Naive thymus-derived CD4-positive, alpha-beta T cell (primary cell): ENCODE measurements at regions of chr1 and their contacts with region 1.

Region 1: DNA sequence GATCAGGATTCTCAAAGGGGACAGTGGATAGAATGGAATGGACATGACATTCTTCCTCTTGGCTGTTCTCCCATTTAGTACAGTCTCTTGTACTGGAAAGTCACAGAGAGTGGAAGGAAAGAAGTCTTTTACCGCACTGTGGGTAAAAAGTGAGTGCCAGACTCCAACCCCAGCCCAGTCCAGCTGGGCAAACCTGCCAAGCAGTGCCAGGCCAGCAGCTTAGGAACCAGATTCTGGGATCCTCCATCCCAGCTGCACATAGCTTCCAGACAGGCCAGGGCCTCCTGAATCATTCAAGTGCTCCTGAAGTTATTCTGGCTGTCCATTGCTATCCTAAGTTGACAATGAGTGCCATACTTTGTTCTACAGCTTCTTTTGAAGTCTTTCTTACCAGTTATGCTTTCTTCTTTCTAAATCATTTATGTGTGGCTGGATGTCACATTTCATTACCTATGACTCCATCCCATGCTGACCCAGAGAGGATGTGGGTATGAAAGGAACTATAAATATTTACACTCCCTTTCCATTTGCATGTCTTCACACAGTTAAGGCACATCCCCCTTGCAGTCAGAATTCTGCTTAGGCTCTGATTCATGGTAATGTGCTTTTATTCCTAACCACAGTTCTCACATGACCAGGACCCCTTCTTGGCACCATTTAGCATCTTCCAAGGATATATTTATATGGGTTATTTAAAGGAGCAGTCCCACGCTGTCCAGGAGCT is 88.9 kb downstream of the AK5 start:
- DNase-seq: peak in 1 of 9 donors; percentile 1
- ATAC-seq: no peak
- H3K4me3 ChIP-seq: no peak overlapping the region
- H3K4me3 Mint-ChIP-seq: peak overlapping the region in 3 of 10 donors; percentile 14 to 23 (median 21)
- H3K27ac ChIP-seq: no peak overlapping the region
- H3K27ac Mint-ChIP-seq: peak overlapping the region in 2 of 9 donors; percentile 16 to 63
- H3K4me1 ChIP-seq: peaks cover 0 to 18% of the 10 kb centered on the region in 2 donors
- H3K4me1 Mint-ChIP-seq: peaks cover 3 to 50% (median 34%) of the 10 kb centered on the region in 7 donors
- H3K27me3 ChIP-seq: no peaks in the 10 kb centered on the region
- H3K27me3 Mint-ChIP-seq: no peaks in the 10 kb centered on the region

Region 2: GRCh38 chr1:77322061-77322900 is 48.5 kb before region 1 on chr1:
- CTCF ChIA-PET with region 1: no interaction called
- POLR2A ChIA-PET with region 1: no interaction called
- intact Hi-C with region 1: loop called in 1 of 2 experiments (anchors 5 kb)
- DNase-seq: no peak
- ATAC-seq: no peak
- H3K4me3 ChIP-seq: no peak overlapping the region
- H3K4me3 Mint-ChIP-seq: no peak overlapping the region
- H3K27ac ChIP-seq: no peak overlapping the region
- H3K27ac Mint-ChIP-seq: peak overlapping the region in 5 of 9 donors; percentile 22 to 75 (median 32)
- H3K4me1 ChIP-seq: no peaks in the 10 kb centered on the region
- H3K4me1 Mint-ChIP-seq: peaks cover 0 to 44% (median 18%) of the 10 kb centered on the region in 7 donors
- H3K27me3 ChIP-seq: no peaks in the 10 kb centered on the region
- H3K27me3 Mint-ChIP-seq: no peaks in the 10 kb centered on the region

Region 3: DNA sequence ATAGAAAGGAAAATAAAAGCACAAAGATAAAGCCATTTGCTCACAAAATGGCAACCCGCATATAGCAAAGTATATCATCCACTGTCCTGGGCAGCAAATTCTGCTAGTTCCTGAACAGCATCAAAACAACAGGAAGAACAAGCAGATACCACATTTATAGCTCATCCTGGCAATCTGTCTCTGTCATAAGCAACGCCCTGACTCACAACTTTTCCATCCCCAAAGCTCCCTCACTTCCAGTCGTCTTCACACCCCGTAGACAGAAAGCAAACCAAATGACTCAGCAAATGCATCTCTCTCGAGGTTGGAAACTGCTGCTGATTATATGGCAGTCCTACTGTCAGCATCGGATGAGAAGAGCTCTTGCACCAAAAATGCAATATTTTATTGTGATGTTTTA is 23.1 kb before region 1 on chr1:
- CTCF ChIA-PET with region 1: no interaction called
- POLR2A ChIA-PET with region 1: no interaction called
- intact Hi-C with region 1: no loop called
- DNase-seq: no peak
- ATAC-seq: no peak
- H3K4me3 ChIP-seq: no peak overlapping the region
- H3K4me3 Mint-ChIP-seq: peak overlapping the region in 8 of 10 donors; percentile 8 to 51 (median 29)
- H3K27ac ChIP-seq: no peak overlapping the region
- H3K27ac Mint-ChIP-seq: peak overlapping the region in 6 of 9 donors; percentile 2 to 40 (median 24)
- H3K4me1 ChIP-seq: peaks cover 0 to 4% of the 10 kb centered on the region in 2 donors
- H3K4me1 Mint-ChIP-seq: peaks cover 7 to 59% (median 31%) of the 10 kb centered on the region in 7 donors
- H3K27me3 ChIP-seq: no peaks in the 10 kb centered on the region
- H3K27me3 Mint-ChIP-seq: no peaks in the 10 kb centered on the region

Region 4: DNA sequence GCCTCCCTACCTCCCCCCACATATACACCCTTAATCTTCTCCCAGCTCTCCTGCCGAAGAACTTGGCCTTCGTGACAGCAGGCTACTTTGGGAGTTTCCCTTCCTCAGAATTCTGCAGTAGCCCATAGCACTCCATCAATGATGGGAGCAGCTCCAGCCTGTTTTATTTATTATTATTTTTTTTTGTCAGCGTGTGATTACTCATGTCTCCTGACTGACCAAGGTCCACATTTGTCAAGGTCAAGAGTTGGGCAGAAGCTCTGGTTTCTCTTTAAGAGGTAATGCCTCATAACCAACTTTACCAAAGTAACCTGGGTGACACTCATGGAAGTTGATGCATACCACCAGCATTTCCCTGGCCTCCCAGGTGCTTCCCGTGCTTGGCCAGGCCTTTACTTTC is 186.3 kb after region 1 on chr1:
- CTCF ChIA-PET with region 1: no interaction called
- POLR2A ChIA-PET with region 1: no interaction called
- intact Hi-C with region 1: no loop called
- DNase-seq: no peak
- ATAC-seq: no peak
- H3K4me3 ChIP-seq: no peak overlapping the region
- H3K4me3 Mint-ChIP-seq: peak overlapping the region in 1 of 10 donors; percentile 36
- H3K27ac ChIP-seq: no peak overlapping the region
- H3K27ac Mint-ChIP-seq: peak overlapping the region in 7 of 9 donors; percentile 21 to 94 (median 68)
- H3K4me1 ChIP-seq: no peaks in the 10 kb centered on the region
- H3K4me1 Mint-ChIP-seq: peaks cover 2 to 20% (median 12%) of the 10 kb centered on the region in 7 donors
- H3K27me3 ChIP-seq: no peaks in the 10 kb centered on the region
- H3K27me3 Mint-ChIP-seq: no peaks in the 10 kb centered on the region